Cardiac septum (tissue), 1 donor: ENCODE measurements at regions of chr15 and their contacts with region 1.

Region 1: GRCh38 chr15:99961011-99961441 is 227.8 kb upstream of the LYSMD4 start:
- DNase-seq: no peak

Region 2: GRCh38 chr15:99677540-99678134 is 283.4 kb before region 1 on chr15:
- intact Hi-C with region 1: no loop called
- DNase-seq: no peak

Region 3: DNA sequence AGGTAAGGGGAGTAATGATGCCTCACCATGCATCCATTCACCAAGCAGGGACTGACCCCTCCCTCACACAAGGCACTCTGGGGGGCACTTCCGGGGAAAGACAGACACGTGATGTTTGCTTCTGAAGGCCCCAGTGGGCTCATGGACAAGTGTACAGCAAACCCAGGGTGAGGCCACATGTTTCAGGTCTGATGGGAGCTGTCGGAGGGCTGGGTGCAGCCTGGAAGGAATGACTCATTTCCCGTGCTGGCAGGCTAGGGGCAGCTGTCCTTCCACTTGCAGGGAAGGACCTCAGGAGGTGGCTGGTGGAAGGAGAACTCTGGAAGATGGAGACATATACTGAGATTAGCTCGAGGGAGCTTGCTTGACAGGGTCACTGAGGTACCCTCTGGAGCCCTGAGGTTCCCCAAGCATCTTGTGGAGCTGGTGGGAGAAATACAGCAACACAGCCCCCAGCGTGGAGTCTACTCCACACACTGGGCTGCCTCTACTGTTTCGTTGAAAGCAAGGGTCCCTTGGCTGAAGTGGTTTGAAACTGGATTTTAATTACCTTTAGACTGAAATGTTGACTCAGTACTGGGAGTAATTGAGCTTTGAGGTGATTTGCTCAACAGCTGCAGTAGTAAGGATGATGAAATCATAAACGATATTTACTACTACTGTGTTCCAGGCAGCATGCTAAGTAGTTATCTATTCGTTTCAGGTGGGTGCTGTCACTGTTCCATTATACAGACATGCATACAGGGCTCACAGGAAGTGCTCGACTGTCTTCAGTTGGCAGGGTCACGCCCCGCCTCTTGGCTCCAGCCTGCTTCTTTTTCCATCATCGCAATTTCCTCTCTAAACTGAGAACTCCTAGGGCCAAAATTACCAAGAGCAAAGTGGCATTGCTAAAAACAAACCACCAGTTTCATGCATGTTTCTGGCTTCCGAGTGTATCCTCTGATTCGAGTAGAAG is 150.4 kb after region 1 on chr15:
- intact Hi-C with region 1: loop called (anchors 10 kb)
- DNase-seq: peak; percentile 86